ENCODE measurements at regions of chr12 and their contacts with region 1.

Region 1: GRCh38 chr12:121467115-121467793 is 67.3 kb downstream of the RNF34 start:
- DNase-seq: peak; percentile 97
- H3K4me3 Mint-ChIP-seq: peak overlapping the region; percentile 56
- H3K27ac Mint-ChIP-seq: peak overlapping the region; percentile 29
- H3K4me1 Mint-ChIP-seq: peaks cover 18% of the 10 kb centered on the region
- H3K27me3 Mint-ChIP-seq: no peaks in the 10 kb centered on the region

Region 2: GRCh38 chr12:121279507-121279915 is 187.7 kb before region 1 on chr12:
- intact Hi-C with region 1: no loop called
- DNase-seq: no peak
- H3K4me3 Mint-ChIP-seq: no peak overlapping the region
- H3K27ac Mint-ChIP-seq: no peak overlapping the region
- H3K4me1 Mint-ChIP-seq: peaks cover 8% of the 10 kb centered on the region
- H3K27me3 Mint-ChIP-seq: no peaks in the 10 kb centered on the region

Region 3: DNA sequence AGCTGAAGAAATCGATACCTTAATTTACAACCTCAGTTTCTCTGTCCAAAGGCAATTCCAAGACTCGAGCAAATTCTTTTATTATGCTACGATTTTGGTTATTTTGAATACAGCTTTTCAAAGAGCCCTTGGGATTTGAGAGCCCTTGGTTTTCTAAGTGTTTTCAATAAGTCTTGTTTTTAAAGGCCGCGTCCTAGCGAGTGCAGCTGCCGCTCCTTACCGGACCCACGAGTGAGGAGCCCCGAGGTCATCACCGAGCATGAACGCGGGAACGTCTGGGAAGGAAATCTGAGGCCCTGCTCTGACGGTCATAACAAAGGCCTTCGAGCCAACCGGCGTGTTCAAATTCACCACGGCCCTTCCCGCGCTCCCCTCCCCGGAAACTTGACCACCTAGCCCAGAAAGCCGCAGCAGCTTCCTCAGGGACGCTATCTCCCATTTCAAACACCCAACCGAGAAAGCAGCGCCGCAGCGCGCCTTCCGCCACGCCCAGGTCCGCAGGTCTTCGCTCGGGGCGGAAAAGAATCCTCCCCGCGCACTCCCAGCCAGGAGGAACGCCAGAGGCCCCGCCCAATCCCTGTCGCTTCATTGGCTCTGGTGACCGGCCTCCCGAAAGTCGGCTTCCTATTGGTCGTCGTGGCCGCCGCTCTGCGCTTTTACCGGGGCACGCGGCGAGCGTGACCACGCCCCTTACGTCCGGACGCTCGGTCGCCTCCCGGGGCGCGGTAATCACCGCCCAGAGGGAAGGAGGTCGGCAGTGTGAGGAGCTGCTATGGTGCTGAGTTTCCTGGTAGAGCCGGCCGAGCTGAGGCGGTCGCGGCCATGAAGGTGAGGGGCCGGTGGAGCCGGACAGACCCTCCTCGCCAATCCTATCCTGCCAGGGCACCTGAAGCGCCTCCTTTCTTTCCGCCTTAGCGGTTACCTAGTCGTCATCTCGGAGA is 67.6 kb before region 1 on chr12 and contains the start of gene RNF34:
- intact Hi-C with region 1: loop called (anchors 2 kb)
- DNase-seq: peak; percentile 99
- H3K4me3 Mint-ChIP-seq: peak within 1 kb of the TSS; percentile 95
- H3K27ac Mint-ChIP-seq: peak within 1 kb of the TSS; percentile 98
- H3K4me1 Mint-ChIP-seq: peaks cover 24% of the 10 kb centered on the region
- H3K27me3 Mint-ChIP-seq: no peaks in the 10 kb centered on the region
- total RNA-seq, gene RNF34: 79.5 and 84.1 TPM in 2 replicates

Region 4: DNA sequence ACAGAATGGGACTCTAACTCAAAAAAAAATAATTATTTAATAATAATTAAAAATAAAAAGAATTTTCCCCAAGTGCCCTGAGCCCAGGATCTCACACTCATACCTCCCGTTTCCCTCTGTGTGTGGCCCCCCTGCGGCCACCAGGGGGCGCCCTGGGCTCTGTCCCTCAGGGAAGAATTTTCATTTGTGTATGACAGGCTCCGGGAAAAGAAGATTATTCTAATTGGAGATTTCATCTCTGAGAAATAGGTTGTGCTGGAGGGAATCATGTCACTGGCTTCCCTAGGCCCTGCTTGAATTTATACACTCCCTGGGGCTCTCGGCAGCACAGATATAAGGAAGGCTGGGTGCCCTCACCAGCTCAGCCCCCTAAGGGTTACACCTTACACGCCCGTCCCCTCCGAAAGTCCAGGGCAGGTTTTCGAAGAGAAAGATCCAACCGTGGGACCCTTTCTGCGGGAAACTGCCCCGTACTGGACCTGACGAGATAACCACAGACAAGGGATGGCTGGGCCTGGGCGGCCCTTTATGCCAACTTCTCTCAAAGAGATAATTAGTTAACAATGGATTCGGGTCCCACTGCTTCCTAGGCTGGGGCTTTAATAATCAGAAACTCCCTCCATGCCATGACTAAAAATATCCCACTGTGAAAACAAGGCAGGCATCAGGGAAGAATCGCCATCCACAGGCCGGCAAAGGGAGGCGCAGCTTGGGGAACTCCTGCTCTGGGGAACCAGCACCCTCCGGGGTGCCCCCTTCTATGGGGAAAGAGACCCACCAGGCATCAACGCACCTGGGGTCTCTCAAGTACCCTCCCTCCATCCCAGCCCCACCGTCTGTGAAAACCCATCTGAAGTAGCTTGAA is 32.9 kb after region 1 on chr12:
- intact Hi-C with region 1: no loop called
- DNase-seq: peak; percentile 92
- H3K4me3 Mint-ChIP-seq: no peak overlapping the region
- H3K27ac Mint-ChIP-seq: no peak overlapping the region
- H3K4me1 Mint-ChIP-seq: peaks cover 11% of the 10 kb centered on the region
- H3K27me3 Mint-ChIP-seq: no peaks in the 10 kb centered on the region

Measured in activated CD4-positive, alpha-beta T cell treated with anti-CD3 and anti-CD28 coated beads, Interleukin-2, amount 10 ng/mL, durations not matched to agents 24 days and 14 days (primary cell).